GM12878 (cell line): ENCODE measurements at regions of chr11 and their contacts with region 1.

Region 1: DNA sequence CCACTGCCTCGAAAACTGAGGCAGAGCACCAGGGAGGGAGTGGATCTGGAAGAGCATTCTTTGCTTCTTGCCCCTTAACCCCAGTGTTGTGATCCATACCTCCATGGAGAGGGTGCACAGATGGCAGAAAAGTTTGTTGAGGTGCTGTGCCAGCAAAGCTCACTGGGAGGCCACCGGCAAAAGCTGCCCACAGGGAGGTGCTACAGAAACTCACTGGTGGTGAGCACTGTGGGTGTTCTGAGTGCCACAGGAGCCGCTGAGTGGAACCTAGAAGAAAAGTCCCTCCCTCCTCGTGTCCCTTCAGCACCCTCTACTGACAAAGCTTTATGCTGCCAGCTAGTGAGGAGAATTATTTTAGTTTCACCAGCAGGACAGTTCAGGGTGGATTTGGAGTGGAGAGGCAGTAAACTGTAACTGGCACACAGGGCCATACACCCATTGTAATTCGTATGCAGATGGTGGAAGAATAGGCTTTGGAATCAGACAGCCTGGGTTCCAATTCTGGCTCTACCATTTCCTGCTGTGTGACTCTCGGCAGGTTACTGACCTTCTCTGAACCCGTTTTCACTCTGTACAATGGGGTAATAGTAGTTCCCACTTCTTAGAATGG is 84.6 kb downstream of the SWAP70 start:
- DNase-seq: peak; percentile 72
- ATAC-seq: peak; percentile 90
- H3K4me3 ChIP-seq: no peak overlapping the region
- H3K27ac ChIP-seq: no peak overlapping the region
- H3K4me1 ChIP-seq: peaks cover 42% of the 10 kb centered on the region
- H3K27me3 ChIP-seq: no peaks in the 10 kb centered on the region
- CTCF ChIP-seq: peak; percentile 83 to 92 (median 91)
- EP300 ChIP-seq: no peak; a peak in 1 of 4 replicates
- POLR2A ChIP-seq: no peak
- RAD21 ChIP-seq: peak; percentile 97

Region 2: DNA sequence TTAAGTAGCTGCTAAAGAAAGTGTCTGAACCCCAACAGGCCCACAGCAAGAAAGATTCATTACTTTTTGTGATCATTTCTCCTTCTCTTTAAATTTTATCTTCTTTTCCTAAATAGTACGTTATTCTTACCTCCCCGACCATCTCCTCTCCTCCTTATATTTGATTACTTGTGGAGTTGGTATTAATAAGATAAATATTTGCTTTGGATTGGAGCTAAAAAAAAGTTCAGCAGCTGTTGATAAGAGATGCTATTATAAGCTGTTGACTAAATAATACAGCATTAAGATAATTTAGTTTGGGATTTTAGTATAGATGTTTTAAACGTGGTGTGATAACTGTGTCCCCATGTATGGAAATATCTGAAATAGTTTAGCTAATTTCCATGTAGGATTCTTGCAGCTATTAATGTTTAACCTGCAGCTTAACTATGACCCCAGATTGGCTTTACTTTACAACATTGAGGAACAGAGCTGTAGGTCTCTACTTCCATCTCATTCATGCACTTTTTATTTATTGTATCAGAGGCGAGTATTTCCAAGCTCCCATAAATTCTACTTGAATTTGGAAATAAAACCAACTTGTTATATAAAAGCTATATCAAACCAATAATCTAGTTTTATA is 249.9 kb before region 1 on chr11:
- CTCF ChIA-PET with region 1: interaction called, 11 read pairs
- POLR2A ChIA-PET with region 1: no interaction called
- RAD21 ChIA-PET with region 1: no interaction called
- SMC1A ChIA-PET with region 1: no interaction called
- in situ Hi-C with region 1: no loop called
- intact Hi-C with region 1: no loop called
- DNase-seq: no peak
- ATAC-seq: no peak
- H3K4me3 ChIP-seq: no peak overlapping the region
- H3K27ac ChIP-seq: no peak overlapping the region
- H3K4me1 ChIP-seq: no peaks in the 10 kb centered on the region
- H3K27me3 ChIP-seq: no peaks in the 10 kb centered on the region
- CTCF ChIP-seq: no peak
- EP300 ChIP-seq: no peak
- POLR2A ChIP-seq: no peak
- RAD21 ChIP-seq: no peak

Region 3: GRCh38 chr11:9601037-9601875 is 147.2 kb before region 1 on chr11:
- CTCF ChIA-PET with region 1: interaction called, 43 read pairs
- POLR2A ChIA-PET with region 1: interaction called, 6 read pairs
- RAD21 ChIA-PET with region 1: interaction called, 12 read pairs
- SMC1A ChIA-PET with region 1: interaction called, 21 read pairs
- in situ Hi-C with region 1: no loop called
- intact Hi-C with region 1: loop called (anchors 1 kb)
- DNase-seq: peak; percentile 95
- ATAC-seq: peak; percentile 90
- H3K4me3 ChIP-seq: peak overlapping the region; percentile 64
- H3K27ac ChIP-seq: peak overlapping the region; percentile 87
- H3K4me1 ChIP-seq: peaks cover 40% of the 10 kb centered on the region
- H3K27me3 ChIP-seq: no peaks in the 10 kb centered on the region
- CTCF ChIP-seq: no peak
- EP300 ChIP-seq: peak in 1 of 2 experiments; percentile 60; a peak in 2 of 4 replicates
- POLR2A ChIP-seq: peak; percentile 30; the same call in 1 of the 2 replicates
- RAD21 ChIP-seq: no peak

Region 4: GRCh38 chr11:9626496-9627394 is 121.7 kb before region 1 on chr11:
- CTCF ChIA-PET with region 1: interaction called, 16 read pairs
- POLR2A ChIA-PET with region 1: interaction called, 3 read pairs
- RAD21 ChIA-PET with region 1: interaction called, 16 read pairs
- SMC1A ChIA-PET with region 1: interaction called, 16 read pairs
- in situ Hi-C with region 1: no loop called
- intact Hi-C with region 1: no loop called
- DNase-seq: no peak
- ATAC-seq: peak; percentile 73
- H3K4me3 ChIP-seq: no peak overlapping the region
- H3K27ac ChIP-seq: no peak overlapping the region
- H3K4me1 ChIP-seq: peaks cover 36% of the 10 kb centered on the region
- H3K27me3 ChIP-seq: no peaks in the 10 kb centered on the region
- CTCF ChIP-seq: no peak
- EP300 ChIP-seq: 0 out of 4 replicates have a peak, but pooled peaks of 1 of the 2 experiments have one; percentile 19
- POLR2A ChIP-seq: no peak
- RAD21 ChIP-seq: no peak

Region 5: DNA sequence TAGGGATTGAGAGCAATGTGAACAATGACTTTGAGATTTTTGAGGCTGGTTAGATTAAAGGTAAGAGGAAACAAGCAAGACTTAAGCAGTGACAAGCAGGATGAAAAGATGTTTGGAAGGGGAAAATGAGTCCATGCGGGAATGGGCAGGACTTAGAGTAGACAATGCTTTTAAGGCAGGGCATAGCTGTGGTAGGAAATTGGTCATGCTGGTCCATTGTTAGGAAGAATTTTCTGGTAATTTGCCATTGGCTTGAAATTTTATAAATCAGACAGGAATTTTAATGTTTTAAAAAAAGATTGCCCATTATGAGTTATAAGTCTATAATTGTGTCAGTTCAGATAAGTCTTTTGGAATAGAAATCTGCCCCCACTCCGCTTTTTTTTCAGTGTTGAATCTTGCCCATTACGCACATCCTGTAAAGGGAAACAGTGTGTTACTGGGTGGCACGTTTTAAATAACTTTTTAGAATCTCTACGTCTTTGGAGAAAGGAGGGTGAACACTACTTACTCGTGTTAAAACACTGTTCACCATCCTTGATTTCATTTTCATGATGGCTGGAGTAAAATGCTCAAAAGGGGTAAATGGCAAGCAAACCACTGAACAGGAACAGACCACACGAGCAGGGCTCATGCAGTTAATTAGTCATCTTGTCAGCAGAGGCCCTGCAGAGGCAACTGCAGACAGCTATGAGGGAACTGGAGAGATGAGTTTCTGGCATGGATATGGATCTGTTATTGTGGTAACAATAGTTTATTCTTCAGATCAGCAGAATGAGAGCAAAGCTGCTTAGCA is 59.6 kb before region 1 on chr11:
- CTCF ChIA-PET with region 1: interaction called, 26 read pairs
- POLR2A ChIA-PET with region 1: interaction called, 4 read pairs
- RAD21 ChIA-PET with region 1: interaction called, 7 read pairs
- SMC1A ChIA-PET with region 1: interaction called, 11 read pairs
- in situ Hi-C with region 1: no loop called
- intact Hi-C with region 1: no loop called
- DNase-seq: peak; percentile 81
- ATAC-seq: peak; percentile 92
- H3K4me3 ChIP-seq: peak overlapping the region; percentile 51
- H3K27ac ChIP-seq: peak overlapping the region; percentile 81
- H3K4me1 ChIP-seq: peaks cover 54% of the 10 kb centered on the region
- H3K27me3 ChIP-seq: no peaks in the 10 kb centered on the region
- CTCF ChIP-seq: no peak
- EP300 ChIP-seq: no peak; a peak in 1 of 4 replicates
- POLR2A ChIP-seq: no peak
- RAD21 ChIP-seq: 0 out of 2 replicates have a peak, but pooled peaks have one; percentile 13

Region 6: GRCh38 chr11:9726321-9727022 is 22.0 kb before region 1 on chr11:
- CTCF ChIA-PET with region 1: interaction called, 11 read pairs
- POLR2A ChIA-PET with region 1: interaction called, 4 read pairs
- RAD21 ChIA-PET with region 1: interaction called, 9 read pairs
- SMC1A ChIA-PET with region 1: interaction called, 15 read pairs
- in situ Hi-C with region 1: no loop called
- intact Hi-C with region 1: no loop called
- DNase-seq: no peak
- ATAC-seq: peak; percentile 67
- H3K4me3 ChIP-seq: no peak overlapping the region
- H3K27ac ChIP-seq: no peak overlapping the region; the same call in 1 of the 2 replicates
- H3K4me1 ChIP-seq: peaks cover 30% of the 10 kb centered on the region
- H3K27me3 ChIP-seq: no peaks in the 10 kb centered on the region
- CTCF ChIP-seq: no peak
- EP300 ChIP-seq: no peak
- POLR2A ChIP-seq: no peak
- RAD21 ChIP-seq: no peak

Region 7: GRCh38 chr11:9951714-9952275 is 203.3 kb after region 1 on chr11:
- CTCF ChIA-PET with region 1: no interaction called
- POLR2A ChIA-PET with region 1: no interaction called
- RAD21 ChIA-PET with region 1: no interaction called
- SMC1A ChIA-PET with region 1: no interaction called
- in situ Hi-C with region 1: no loop called
- intact Hi-C with region 1: no loop called
- DNase-seq: no peak
- ATAC-seq: no peak
- H3K4me3 ChIP-seq: no peak overlapping the region
- H3K27ac ChIP-seq: no peak overlapping the region
- H3K4me1 ChIP-seq: no peaks in the 10 kb centered on the region; the same call in 1 of the 2 replicates
- H3K27me3 ChIP-seq: no peaks in the 10 kb centered on the region
- CTCF ChIP-seq: no peak
- EP300 ChIP-seq: no peak
- POLR2A ChIP-seq: no peak
- RAD21 ChIP-seq: no peak